Prostate gland (tissue), 2 donors: ENCODE measurements at regions of chr1 and their contacts with region 1.

Region 1: GRCh38 chr1:1906185-1907097 is 8.6 kb upstream of the CALML6 start:
- DNase-seq: peak; percentile 80
- H3K4me3 ChIP-seq: no peak overlapping the region
- H3K27ac ChIP-seq: no peak overlapping the region
- H3K4me1 ChIP-seq: peaks cover 5% of the 10 kb centered on the region
- H3K27me3 ChIP-seq: no peaks in the 10 kb centered on the region
- CTCF ChIP-seq: peak; percentile 70 to 96 (median 90)
- POLR2A ChIP-seq: no peak

Region 2: DNA sequence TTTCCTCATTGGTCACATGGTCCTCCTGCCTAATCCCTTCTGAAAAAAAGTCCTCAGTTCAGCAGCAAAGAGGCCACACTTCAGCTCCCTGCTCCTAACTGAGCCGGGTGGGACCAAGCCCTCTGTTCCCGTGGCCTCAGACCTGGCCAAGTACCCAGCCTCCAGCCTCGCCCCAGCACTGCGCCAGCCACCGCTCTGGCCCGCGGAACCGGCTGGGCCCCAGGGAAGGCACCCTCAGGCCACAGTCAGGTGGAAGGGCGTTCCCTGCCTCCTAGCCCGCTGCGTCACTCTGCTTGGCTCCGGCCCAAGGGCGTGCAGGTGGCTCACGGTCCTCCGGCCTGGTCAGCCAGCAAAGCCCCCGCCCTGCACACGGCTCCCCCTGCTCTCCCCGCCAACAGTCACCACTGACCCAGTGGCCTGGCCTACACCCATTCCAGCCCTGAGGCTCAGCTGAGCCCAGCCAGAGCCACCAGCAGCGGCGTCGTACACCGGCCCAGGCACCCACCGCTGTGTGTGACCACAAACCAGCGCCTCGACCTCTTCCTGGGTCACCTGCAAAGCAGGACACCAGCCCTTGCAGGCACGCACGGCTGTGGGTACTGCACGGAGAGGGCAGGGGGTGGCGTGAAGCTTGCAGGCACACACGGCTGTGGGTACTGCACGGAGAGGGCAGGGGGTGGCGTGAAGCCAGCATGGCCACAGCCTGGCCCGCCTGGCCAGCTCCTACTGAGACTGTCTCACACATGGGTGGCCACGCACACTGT is 147.6 kb before region 1 on chr1:
- intact Hi-C with region 1: loop called (anchors 10 kb)
- DNase-seq: peak; percentile 85
- H3K4me3 ChIP-seq: no peak overlapping the region
- H3K27ac ChIP-seq: peak overlapping the region; percentile 80 to 83
- H3K4me1 ChIP-seq: peaks cover 17% of the 10 kb centered on the region
- H3K27me3 ChIP-seq: no peaks in the 10 kb centered on the region
- CTCF ChIP-seq: no peak
- POLR2A ChIP-seq: peak; percentile 64

Region 3: DNA sequence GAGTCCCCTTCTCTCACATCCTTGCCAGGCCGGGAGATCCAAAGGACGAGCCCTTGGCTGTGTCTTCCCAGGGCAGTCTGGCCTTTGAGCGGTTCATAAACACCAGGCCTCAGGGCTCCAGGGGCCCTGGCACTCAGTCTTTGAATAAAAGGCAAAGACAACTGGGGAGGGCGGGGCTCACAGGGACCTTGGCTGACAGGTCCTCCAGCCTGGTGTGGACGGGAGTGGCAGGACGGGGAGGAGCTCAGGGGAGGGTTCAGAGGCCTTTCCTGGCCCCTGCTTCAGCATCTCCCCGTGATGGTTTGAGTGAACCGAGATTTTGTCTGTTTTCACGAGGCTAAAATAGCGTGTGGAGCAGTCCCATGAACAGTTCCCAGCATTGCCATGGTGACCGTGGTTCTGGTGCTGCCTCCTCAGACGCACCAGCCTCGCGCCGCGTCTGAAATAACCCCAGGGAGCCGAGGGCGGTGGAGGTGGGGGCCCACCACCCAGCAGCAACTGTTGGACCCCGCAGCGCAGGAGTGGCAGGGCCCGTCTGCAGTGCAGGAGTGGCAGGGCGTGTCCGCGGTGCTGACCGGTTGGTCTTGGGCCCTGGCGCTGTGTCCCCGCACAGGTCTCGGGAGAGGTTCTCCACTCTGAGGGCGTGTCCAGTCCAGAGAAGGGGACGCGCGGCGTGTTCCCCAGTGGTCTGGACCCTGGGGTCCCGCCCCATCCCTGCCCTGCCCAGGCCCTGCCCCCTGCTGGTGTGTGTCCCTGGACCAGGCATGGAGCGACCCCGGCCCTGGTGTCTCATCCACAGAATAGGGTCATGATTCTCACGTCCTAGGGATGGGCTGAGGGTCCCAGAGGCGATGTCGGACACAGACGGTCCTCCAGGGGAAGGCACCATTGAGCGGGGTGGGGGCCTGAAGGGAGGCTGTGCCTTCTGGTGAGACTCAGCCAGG is 136.7 kb after region 1 on chr1:
- intact Hi-C with region 1: no loop called
- DNase-seq: no peak
- H3K4me3 ChIP-seq: no peak overlapping the region
- H3K27ac ChIP-seq: no peak overlapping the region
- H3K4me1 ChIP-seq: peaks cover 3% of the 10 kb centered on the region
- H3K27me3 ChIP-seq: no peaks in the 10 kb centered on the region
- CTCF ChIP-seq: no peak
- POLR2A ChIP-seq: no peak

Region 4: DNA sequence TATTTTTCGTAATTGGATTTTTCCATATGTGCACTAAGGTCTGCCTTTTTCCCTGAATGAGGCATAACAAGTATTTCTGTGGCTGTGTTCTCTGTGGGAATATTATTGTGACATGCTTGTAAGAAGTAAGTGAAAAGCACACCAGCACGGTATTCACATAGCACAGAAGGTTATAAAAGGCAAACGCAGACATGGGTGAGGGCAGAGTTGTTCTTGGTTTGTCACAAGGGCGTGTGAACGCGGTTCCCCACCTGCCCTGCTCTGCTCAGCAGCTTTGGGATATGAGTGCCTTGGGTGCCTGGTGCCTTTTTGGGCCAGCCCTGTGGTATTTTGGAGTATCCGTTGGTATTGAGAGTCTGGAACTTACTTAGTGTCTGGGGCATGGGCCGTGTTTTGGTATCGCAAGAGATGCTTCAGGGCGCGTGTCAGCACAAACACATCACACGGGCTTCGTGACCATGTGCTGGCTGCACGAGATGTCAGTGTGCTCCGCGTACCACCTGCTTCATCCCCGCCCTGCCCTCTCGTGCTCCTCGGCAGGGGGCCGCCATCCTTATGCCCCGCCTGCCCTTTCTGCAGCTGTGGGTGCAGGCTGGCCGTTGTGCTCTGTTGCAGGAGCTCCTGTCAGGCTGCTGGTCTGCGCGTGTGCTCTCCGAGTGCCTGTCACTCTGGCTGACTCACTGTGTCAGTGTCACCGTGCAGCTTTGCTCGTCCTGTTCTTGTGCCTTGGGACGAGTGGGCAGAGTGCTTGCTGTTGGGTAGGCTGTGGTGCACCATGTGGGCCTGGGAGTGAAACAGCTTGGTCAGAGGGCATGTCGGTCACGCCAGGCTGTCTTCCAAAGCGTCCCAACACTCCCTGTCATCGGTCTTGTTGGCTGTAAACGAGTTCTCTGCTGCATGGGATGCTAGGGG is 336.6 kb after region 1 on chr1:
- intact Hi-C with region 1: no loop called
- DNase-seq: no peak
- H3K4me3 ChIP-seq: no peak overlapping the region
- H3K27ac ChIP-seq: no peak overlapping the region
- H3K4me1 ChIP-seq: peaks cover 36% of the 10 kb centered on the region
- H3K27me3 ChIP-seq: no peaks in the 10 kb centered on the region
- CTCF ChIP-seq: no peak
- POLR2A ChIP-seq: no peak